ENCODE measurements at regions of chr1 and their contacts with region 1.

Region 1: DNA sequence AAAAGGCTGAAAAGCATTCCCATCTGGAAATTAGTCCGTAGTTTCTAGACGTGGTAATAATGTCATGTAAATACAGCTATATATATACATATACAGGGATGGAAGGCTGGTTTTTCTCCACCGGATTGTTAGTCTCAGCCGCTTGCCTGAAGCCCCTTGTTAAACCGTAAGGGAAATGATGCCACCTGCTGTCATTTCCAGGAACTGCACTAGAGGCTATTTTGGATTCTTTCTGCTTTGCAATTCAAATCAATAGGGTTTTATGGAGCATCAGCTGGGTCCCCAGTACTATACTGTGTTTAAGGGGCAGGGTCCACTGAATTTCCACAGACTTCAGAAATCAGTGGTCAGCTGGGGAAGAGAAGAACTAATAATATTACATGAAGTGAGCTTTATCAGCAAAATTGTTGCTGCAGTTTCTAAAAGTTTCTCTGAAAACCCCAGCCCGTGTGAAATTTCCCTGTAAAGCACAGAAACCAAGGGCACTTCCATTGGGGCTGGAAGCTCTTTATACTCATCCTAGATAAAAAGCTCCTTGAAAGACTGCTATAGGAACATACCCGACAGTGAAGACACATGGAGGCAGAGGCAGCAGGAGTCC is 33.8 kb upstream of the MPZL1 start:
- DNase-seq: no peak
- ATAC-seq: peak; percentile 51

Region 2: GRCh38 chr1:167599957-167600581 is 88.0 kb before region 1 on chr1:
- intact Hi-C with region 1: loop called (anchors 2 kb)
- DNase-seq: peak; percentile 60
- ATAC-seq: peak; percentile 85

Region 3: DNA sequence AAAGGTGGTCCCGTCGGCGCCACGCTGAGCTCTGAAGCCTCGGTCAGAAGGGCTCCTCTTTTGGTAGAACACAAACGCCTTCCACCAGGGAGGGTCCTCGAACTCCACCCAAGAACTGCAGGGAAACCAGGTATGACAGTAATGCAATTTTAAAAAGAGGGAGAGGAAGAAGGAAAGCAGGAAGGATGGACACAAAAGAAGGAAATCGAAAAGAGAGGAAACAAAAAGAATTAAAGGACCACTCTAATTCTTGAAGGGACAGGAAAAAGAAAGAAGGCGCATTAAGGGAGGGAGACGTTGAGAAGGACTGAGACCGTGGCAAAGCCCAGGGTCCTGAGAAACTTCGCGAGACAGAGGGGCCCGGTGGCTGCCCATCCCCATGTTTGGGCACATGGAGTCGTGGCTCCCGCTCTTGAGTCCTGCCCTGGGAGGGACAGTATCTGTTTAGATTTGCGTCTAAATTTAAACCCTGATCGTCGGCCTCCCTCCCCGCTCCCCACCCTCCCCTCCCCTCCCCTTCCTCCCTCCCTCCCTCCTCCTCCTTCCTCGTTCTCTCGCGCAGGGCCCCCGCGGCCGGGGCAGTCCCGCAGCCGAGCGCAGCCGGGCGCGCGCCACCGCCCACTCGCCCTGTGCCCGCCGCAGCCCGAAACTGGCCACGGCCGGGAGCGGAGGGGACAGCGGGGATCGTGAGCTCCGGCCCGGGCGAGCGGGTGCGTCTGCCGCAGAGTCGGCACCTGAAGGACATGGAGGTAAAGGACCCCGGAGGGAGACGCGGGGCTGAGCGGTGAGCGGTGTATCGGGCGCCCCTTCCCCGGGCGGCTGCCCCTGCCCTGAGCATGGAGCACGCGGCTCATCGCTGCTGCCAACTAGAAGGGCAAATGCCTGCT is 58.1 kb before region 1 on chr1 and contains the start of gene RCSD1:
- intact Hi-C with region 1: loop called (anchors 2 kb)
- DNase-seq: peak; percentile 66
- ATAC-seq: peak; percentile 84
- total RNA-seq, gene RCSD1: 42.9 TPM

Region 4: DNA sequence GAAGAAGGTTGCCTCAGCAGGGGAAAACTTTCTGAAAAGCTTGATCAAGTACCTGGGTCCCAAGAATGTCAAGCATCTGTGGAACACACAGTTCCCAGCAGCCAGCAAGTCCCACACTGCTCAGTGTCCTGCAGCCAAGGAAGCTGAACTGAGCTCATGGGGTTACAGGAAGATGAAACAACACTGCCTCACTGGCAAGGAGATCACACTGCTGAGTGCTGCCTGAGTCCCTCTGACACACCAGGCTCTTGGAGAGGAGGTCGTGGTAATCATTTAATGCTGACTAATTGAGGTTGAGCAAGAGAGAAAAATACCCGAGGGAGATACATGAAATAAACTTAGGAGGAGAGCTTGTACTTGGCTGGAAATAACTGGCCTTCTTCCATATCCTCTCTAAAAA is 109.0 kb after region 1 on chr1:
- intact Hi-C with region 1: no loop called
- DNase-seq: peak; percentile 81
- ATAC-seq: peak; percentile 95

Measured in Right ventricle myocardium superior (tissue), 1 donor.